Ascending aorta (tissue), 2 donors: ENCODE measurements at regions of chr5 and their contacts with region 1.

Region 1: DNA sequence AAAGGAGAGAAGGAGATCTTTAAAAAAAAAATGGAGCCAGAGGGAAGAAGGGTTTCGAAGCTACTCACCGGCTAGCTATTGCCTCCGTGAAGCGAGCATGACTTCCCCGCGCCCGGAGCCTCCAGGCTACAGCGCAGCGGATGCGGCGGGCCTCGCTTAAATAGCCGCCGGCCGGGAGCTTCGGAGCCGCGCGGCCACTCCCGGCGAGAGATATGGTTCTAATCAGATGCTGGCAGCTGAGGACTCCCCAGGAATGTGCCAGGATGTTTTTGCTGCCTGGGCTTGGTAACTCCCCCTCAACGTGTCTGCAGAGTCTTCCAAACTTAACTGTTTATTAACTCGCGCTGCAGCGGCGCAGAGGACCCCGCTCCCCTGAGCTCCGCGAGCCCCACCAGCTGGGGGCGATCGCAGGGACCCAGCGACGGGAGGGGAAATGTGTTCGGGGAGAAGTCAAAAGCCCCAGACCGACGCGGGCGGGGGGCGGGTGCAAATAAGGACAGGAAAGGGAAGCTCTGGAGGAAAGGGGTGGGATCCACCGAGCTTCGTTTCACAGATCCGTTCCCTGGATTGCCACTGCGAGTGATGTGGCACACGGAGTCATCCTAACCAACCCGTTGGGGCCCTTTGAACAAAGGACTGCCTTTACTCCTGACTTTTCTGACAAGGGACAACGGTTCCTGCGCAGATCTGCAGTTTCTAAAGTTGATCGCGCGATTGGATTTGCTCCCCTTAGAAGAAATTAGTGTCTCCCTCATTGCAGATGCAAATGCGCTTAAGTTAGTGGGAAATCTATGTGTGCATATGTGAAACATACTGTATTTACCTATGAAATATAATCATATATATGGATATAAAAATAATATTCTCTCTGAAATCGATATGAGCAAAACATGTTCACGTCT is at the start of gene DAB2:
- DNase-seq: peak; percentile 74 to 92
- H3K4me3 ChIP-seq: peak within 1 kb of the TSS; percentile 65 to 80
- H3K27ac ChIP-seq: peak within 1 kb of the TSS; percentile 77 to 85
- H3K4me1 ChIP-seq: peaks cover 0 to 27% of the 10 kb centered on the region in 2 donors
- H3K27me3 ChIP-seq: no peaks in the 10 kb centered on the region
- CTCF ChIP-seq: peak; percentile 45 to 68 (median 60)
- total RNA-seq, gene DAB2: 33.6 TPM

Region 2: GRCh38 chr5:39376293-39376714 is 48.7 kb before region 1 on chr5:
- intact Hi-C with region 1: loop called (anchors 5 kb)
- DNase-seq: no peak
- H3K4me3 ChIP-seq: no peak overlapping the region
- H3K27ac ChIP-seq: no peak overlapping the region
- H3K4me1 ChIP-seq: no peaks in the 10 kb centered on the region
- H3K27me3 ChIP-seq: no peaks in the 10 kb centered on the region
- CTCF ChIP-seq: peak; percentile 37 to 83 (median 72)

Region 3: DNA sequence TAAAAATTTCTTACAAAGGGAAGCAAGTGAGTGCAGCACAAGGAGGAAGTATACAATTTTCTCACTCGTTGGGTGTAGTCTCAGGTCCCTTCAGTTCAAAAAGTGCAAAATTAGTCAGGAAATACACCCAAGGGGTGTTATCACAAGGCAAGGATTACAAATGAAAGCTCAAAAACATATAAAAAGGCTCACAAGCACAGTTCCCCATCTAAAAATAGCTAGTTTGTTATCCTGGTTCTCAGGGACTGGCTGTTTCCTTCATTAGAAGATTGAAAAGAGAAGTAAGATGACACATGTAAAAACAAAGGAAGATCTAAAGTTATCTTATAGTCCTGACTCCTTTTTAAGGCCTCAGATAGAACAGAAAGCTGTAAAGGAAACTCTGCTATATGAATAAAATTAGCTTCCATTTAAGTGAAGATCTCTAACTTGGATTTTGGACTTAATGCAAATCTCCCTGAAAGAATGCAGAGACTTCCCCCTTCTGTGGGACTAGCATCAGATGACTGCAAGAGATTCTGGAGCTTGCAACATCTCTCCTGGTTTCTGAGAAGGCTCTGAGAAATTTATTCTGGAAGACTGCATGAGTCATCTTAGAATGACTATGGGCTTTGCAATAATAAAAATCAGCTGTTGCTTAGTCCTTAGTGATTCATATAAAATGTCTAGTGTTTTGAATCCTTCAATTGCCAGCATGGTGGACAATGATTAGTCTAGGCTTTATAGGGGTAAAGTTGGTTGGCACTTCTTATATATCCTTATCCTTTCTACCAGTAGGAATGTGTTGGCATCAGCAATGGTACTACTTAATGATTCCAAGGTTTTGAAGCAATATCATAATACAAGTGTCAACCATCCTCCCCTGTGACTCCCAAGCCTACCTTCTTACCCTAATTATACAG is 25.6 kb before region 1 on chr5:
- intact Hi-C with region 1: loop called (anchors 1 kb)
- DNase-seq: peak; percentile 35 to 71
- H3K4me3 ChIP-seq: no peak overlapping the region
- H3K27ac ChIP-seq: peak overlapping the region; percentile 79 to 91
- H3K4me1 ChIP-seq: peaks cover 3 to 28% of the 10 kb centered on the region in 2 donors
- H3K27me3 ChIP-seq: no peaks in the 10 kb centered on the region
- CTCF ChIP-seq: no peak

Region 4: DNA sequence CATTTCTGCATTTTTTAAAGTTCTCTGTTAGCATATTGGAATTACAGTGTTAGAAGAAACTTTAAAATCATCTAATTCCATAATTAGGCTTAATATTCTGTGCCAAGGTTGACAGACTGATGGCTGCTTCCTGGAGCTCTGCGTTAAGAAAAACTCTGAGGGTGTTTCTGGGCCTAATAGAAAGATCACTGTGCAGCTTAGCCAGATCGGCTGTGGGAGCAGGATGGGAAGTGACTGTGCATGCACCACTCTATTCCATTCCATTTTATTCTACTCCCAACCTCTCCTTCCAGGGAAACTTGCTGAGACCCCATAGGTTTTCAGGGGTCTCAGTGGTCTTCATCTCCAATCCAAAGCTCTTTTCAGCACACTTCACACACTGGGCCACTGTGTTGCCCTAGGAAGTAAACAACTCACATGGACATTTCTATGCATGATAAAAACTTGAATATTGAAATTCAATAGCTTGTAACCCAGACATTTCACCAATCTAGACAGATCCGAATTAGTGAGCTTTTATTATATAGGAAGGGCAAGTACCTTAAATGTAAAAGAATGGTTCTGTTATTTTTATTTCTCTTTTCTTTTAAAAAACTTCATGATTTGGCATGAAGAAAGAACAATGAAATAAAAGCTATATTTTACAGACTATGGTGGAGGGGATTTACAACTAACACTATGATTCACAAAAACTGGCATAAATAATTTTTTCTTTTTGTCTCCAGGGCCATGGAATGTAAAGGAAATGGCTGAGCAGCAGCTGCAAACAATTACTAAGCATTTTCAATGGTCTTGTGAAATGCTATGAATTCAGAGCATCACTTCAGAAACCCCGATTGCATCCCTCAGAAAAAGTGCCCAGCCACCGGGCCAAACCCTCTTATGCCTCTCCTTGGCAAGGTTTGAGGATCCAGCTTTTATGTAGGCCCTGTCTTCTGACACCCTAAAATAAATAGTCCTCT is 51.2 kb after region 1 on chr5:
- intact Hi-C with region 1: no loop called
- DNase-seq: no peak
- H3K4me3 ChIP-seq: no peak overlapping the region
- H3K27ac ChIP-seq: peak overlapping the region in 1 of 2 donors; percentile 47
- H3K4me1 ChIP-seq: peaks cover 3 to 11% of the 10 kb centered on the region in 2 donors
- H3K27me3 ChIP-seq: no peaks in the 10 kb centered on the region
- CTCF ChIP-seq: no peak

Region 5: DNA sequence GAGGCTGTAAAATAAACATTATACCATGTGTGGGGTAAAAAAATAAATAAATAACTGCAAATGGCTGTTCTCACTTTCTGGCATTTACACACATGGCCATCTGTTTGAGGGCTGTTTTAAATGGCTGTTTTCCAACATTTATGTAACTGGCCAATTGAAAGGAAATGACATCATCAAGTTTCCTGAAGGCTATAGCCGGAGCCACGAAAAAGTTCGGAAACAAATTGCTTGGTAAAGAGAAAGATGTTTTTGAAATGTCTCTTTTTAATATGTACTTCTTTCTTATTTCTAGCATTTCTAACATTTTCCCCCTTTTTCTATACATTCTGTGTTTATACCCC is 95.2 kb after region 1 on chr5:
- intact Hi-C with region 1: loop called (anchors 5 kb)
- DNase-seq: no peak
- H3K4me3 ChIP-seq: no peak overlapping the region
- H3K27ac ChIP-seq: peak overlapping the region; percentile 50 to 51
- H3K4me1 ChIP-seq: peaks cover 5 to 18% of the 10 kb centered on the region in 2 donors
- H3K27me3 ChIP-seq: no peaks in the 10 kb centered on the region
- CTCF ChIP-seq: no peak